Activated CD4-positive, alpha-beta memory T cell treated with anti-CD3 and anti-CD28 coated beads, Interleukin-2, amount 10 ng/mL, durations not matched to agents 7 days and 5 days (primary cell): ENCODE measurements at regions of chr11 and their contacts with region 1.

Region 1: DNA sequence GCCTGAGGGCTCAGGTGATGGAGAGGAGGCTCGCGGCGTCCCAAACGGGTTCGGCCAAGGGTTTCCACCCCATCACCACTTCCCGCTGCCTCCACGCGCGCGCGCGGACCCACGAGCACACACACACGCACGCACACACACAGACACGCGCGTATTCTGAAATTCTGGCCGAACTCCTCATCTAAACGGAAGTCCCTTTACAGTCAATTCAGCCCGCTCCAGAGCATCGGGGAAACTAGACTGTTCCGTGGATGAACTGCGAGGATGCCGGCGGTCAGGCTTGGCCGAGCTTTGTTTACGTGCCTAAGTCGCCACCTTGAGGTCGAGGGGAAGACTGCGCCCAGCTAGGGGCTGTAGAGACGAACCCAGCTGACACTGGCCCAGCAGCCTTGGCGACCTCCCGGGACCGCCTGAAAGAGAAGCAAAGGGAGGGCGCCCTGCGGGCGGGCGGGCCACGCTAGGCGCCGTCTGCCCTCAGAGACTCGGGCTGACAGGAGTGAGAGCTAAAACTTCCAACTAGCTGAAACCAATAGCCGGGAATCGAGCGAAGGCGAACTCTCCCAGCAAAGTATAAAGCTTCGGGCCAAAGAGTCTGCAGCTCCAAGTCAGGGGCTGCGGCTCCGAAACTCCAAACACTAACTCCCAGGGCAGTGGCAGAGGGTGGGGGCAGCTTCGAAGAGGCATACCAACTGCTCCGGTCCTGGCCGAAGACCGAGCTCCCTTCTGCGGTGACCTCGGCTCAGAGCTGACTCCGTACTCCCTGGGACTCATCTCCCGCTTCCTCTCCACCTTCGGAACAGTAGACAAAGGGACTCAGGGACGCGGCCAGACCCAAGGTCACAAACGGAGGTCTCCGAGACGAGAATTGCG is 124.7 kb upstream of the C11orf58 start:
- DNase-seq: peak; percentile 69
- H3K4me3 Mint-ChIP-seq: peak overlapping the region; percentile 46
- H3K27ac Mint-ChIP-seq: no peak overlapping the region
- H3K4me1 Mint-ChIP-seq: peaks cover 19% of the 10 kb centered on the region
- H3K27me3 Mint-ChIP-seq: peaks cover 46% of the 10 kb centered on the region

Region 2: GRCh38 chr11:16226245-16226644 is 387.5 kb before region 1 on chr11:
- CTCF ChIA-PET with region 1: no interaction called
- POLR2A ChIA-PET with region 1: no interaction called
- DNase-seq: no peak
- H3K4me3 Mint-ChIP-seq: no peak overlapping the region
- H3K27ac Mint-ChIP-seq: no peak overlapping the region
- H3K4me1 Mint-ChIP-seq: no peaks in the 10 kb centered on the region
- H3K27me3 Mint-ChIP-seq: no peaks in the 10 kb centered on the region

Region 3: DNA sequence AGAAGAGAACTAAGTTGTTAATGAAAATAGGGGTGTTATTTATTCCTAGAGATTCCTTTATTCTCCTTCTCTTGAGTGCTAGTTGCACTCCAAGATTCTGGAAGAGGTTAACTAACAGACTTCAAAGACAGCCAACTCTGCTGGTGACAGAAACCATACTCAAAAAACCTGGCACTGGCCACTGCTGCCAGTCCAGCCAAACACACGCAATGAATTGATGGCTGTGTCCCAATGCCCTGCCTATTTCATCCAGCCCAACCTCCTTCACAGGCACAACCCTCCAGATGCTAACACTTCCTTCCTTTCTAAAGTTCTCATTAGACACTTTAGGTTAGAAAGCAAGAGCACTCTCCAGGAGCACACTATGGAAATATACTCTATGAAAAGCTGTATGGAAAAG is 26.1 kb before region 1 on chr11:
- CTCF ChIA-PET with region 1: interaction called, 15 read pairs
- POLR2A ChIA-PET with region 1: no interaction called
- DNase-seq: no peak
- H3K4me3 Mint-ChIP-seq: no peak overlapping the region
- H3K27ac Mint-ChIP-seq: no peak overlapping the region
- H3K4me1 Mint-ChIP-seq: no peaks in the 10 kb centered on the region
- H3K27me3 Mint-ChIP-seq: no peaks in the 10 kb centered on the region

Region 4: GRCh38 chr11:16881074-16881709 is 267.4 kb after region 1 on chr11:
- CTCF ChIA-PET with region 1: no interaction called
- POLR2A ChIA-PET with region 1: no interaction called
- DNase-seq: no peak
- H3K4me3 Mint-ChIP-seq: no peak overlapping the region
- H3K27ac Mint-ChIP-seq: no peak overlapping the region
- H3K4me1 Mint-ChIP-seq: no peaks in the 10 kb centered on the region
- H3K27me3 Mint-ChIP-seq: no peaks in the 10 kb centered on the region